Gastrocnemius medialis (tissue), 4 donors: ENCODE measurements at regions of chr20 and their contacts with region 1.

Region 1: DNA sequence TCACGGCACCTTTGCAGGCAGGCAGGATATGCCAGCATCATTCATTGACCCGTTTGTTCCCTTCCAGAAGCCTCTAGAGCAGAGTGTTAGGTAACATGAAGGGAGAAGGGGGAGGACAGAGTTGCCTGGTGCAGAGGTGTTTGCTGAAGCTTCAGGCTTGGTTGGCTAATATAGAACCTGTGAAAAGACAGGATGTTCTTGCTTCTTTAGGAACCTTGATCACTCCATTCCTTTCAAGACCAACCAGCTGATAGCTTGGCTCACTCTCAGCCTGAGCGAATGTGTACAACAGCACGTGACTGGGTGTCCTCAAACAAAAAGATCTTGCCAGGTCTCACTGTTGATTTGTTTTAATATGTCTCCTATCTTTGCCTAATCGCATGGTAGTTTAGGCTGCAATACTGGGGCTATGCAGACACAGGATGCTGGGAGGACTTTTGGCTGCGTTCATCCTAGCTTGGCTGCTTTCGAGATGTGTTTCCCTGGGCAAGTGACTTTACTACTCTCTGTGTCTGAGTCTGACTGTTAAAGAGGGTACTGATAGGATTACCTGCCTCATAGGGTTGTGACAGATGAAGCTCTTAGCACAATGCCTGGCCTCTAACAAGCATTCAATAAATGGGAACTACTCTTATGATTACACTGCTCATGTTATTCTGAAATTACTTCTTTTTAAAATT is 16.0 kb downstream of the SHLD1 start:
- DNase-seq: peak; percentile 83 to 91
- ATAC-seq: peak; percentile 89 to 95
- H3K4me3 ChIP-seq: no peak overlapping the region
- H3K27ac ChIP-seq: peak overlapping the region; percentile 89 to 92 (median 90)
- H3K4me1 ChIP-seq: peaks cover 11 to 28% of the 10 kb centered on the region in 2 donors
- H3K27me3 ChIP-seq: no peaks in the 10 kb centered on the region
- CTCF ChIP-seq: no peak
- POLR2A ChIP-seq: peak in 1 of 2 donors; percentile 41

Region 2: GRCh38 chr20:5779071-5779900 is 13.1 kb after region 1 on chr20:
- in situ Hi-C with region 1: no loop called
- intact Hi-C with region 1: loop called (anchors 1 kb)
- DNase-seq: peak; percentile 75 to 84
- ATAC-seq: peak; percentile 98 to 99
- H3K4me3 ChIP-seq: no peak overlapping the region
- H3K27ac ChIP-seq: peak overlapping the region; percentile 84 to 94 (median 89)
- H3K4me1 ChIP-seq: peaks cover 18 to 29% of the 10 kb centered on the region in 2 donors
- H3K27me3 ChIP-seq: no peaks in the 10 kb centered on the region
- CTCF ChIP-seq: no peak
- POLR2A ChIP-seq: peak in 1 of 2 donors; percentile 75